Activated CD4-positive, alpha-beta T cell treated with anti-CD3 and anti-CD28 coated beads, Interleukin-2, amount 10 ng/mL, durations not matched to agents 24 days and 14 days (primary cell): ENCODE measurements at regions of chr12 and their contacts with region 1.

Region 1: DNA sequence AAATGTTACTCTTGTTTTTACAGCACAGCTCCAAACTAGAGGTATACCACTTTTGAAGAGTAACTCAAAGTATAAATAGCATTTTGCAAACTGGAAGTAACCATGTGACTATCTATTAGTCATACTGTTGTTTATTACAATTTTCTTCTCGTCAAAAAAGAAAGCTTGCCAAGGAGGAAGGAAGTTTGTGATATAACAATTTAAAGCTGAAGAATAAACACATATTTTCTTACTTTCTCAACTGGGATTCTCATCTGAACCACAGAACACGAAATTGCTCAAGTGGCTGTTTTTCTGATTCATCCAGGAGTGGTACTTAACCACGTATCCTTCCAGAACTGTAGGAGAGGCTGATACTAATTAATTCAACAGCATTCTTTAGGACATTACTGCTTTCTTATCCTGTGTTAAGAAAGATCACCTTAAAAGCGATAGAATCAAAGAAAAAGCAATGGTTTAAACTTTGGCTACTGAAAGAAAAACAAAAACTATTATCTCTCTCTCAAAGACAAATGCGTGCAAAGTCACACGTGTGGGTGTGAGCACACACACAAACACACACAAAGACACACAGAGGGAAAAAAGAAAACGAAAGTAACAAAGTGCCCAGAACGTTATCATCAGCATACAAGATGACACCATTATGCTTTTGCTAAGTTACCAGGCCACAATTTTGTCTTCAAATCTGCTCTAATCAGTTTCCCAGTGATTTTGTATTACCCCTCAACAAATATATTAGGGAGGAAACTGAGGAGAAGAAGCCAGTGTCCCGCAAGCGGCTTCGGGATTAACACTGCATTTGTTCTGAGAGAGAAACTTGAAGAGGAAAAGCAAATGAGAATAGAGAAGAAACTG is at the start of gene CLEC2B:
- DNase-seq: peak; percentile 80
- H3K4me3 Mint-ChIP-seq: peak within 1 kb of the TSS; percentile 92
- H3K27ac Mint-ChIP-seq: peak within 1 kb of the TSS; percentile 93
- H3K4me1 Mint-ChIP-seq: peaks cover 28% of the 10 kb centered on the region
- H3K27me3 Mint-ChIP-seq: no peaks in the 10 kb centered on the region
- total RNA-seq, gene CLEC2B: 13.0 and 13.1 TPM in 2 replicates

Region 2: GRCh38 chr12:9027161-9028059 is 842.1 kb before region 1 on chr12:
- intact Hi-C with region 1: loop called (anchors 10 kb)
- DNase-seq: peak; percentile 73
- H3K4me3 Mint-ChIP-seq: peak overlapping the region; percentile 8
- H3K27ac Mint-ChIP-seq: peak overlapping the region; percentile 82
- H3K4me1 Mint-ChIP-seq: peaks cover 14% of the 10 kb centered on the region
- H3K27me3 Mint-ChIP-seq: peaks cover 2% of the 10 kb centered on the region

Region 3: GRCh38 chr12:9673404-9674225 is 195.9 kb before region 1 on chr12:
- intact Hi-C with region 1: loop called (anchors 2 kb)
- DNase-seq: peak; percentile 86
- H3K4me3 Mint-ChIP-seq: peak overlapping the region; percentile 89
- H3K27ac Mint-ChIP-seq: peak overlapping the region; percentile 97
- H3K4me1 Mint-ChIP-seq: peaks cover 58% of the 10 kb centered on the region
- H3K27me3 Mint-ChIP-seq: no peaks in the 10 kb centered on the region

Region 4: GRCh38 chr12:9797722-9798619 is 71.6 kb before region 1 on chr12:
- intact Hi-C with region 1: loop called (anchors 1 kb)
- DNase-seq: peak; percentile 92
- H3K4me3 Mint-ChIP-seq: peak overlapping the region; percentile 81
- H3K27ac Mint-ChIP-seq: peak overlapping the region; percentile 78
- H3K4me1 Mint-ChIP-seq: peaks cover 43% of the 10 kb centered on the region
- H3K27me3 Mint-ChIP-seq: peaks cover 8% of the 10 kb centered on the region

Region 5: GRCh38 chr12:9925708-9926393 is 56.3 kb after region 1 on chr12:
- intact Hi-C with region 1: loop called (anchors 2 kb)
- DNase-seq: peak; percentile 73
- H3K4me3 Mint-ChIP-seq: peak overlapping the region; percentile 52
- H3K27ac Mint-ChIP-seq: no peak overlapping the region
- H3K4me1 Mint-ChIP-seq: peaks cover 21% of the 10 kb centered on the region
- H3K27me3 Mint-ChIP-seq: peaks cover 16% of the 10 kb centered on the region

Region 6: DNA sequence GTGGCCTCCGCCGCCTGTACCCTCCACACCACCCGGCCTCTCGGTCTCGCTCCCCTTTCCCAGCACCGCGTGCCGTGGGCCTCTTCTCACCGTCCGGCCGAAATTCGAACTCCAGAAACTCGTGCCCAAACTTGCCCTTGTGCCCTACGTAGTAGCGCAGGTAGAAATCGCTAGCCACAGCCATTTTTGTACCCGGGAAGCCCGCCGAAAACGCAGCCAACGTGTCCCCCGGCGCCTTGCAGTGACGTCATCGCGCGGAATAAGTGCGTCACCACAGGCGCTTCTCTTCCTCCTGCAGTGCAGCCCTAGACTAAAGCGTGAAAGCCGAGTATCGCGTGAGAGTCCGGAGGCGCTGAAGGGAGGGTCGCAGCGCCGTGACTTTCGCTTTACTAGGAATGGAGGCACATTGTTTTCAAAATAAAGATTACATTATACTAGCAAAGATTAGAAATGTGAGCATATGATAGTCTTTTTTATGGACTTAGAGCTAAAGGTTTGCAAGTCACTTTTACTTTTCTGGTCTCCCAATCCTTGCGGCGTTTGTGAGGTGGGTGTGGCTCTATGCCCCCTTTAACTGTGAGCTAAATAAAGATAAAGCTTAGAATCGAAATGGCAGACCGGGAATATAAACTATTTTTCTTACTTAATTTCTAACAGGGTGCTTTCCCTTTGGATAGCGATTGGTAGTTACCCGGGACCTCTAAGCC is 744.0 kb after region 1 on chr12 and contains the start of gene MAGOHB:
- intact Hi-C with region 1: loop called (anchors 5 kb)
- DNase-seq: peak; percentile 100
- H3K4me3 Mint-ChIP-seq: peak within 1 kb of the TSS; percentile 100
- H3K27ac Mint-ChIP-seq: peak within 1 kb of the TSS; percentile 100
- H3K4me1 Mint-ChIP-seq: peaks cover 27% of the 10 kb centered on the region
- H3K27me3 Mint-ChIP-seq: peaks cover 19% of the 10 kb centered on the region
- total RNA-seq, gene MAGOHB: 88.6 and 91.1 TPM in 2 replicates